Gastrocnemius medialis (tissue), 4 donors: ENCODE measurements at regions of chr15 and their contacts with region 1.

Region 1: GRCh38 chr15:78108299-78109084 is 16.1 kb downstream of the SH2D7 start:
- DNase-seq: peak; percentile 63 to 80
- ATAC-seq: peak; percentile 82 to 89
- H3K4me3 ChIP-seq: no peak overlapping the region
- H3K27ac ChIP-seq: no peak overlapping the region
- H3K4me1 ChIP-seq: no peaks in the 10 kb centered on the region
- H3K27me3 ChIP-seq: no peaks in the 10 kb centered on the region
- CTCF ChIP-seq: peak; percentile 95 to 97 (median 95)
- POLR2A ChIP-seq: no peak

Region 2: DNA sequence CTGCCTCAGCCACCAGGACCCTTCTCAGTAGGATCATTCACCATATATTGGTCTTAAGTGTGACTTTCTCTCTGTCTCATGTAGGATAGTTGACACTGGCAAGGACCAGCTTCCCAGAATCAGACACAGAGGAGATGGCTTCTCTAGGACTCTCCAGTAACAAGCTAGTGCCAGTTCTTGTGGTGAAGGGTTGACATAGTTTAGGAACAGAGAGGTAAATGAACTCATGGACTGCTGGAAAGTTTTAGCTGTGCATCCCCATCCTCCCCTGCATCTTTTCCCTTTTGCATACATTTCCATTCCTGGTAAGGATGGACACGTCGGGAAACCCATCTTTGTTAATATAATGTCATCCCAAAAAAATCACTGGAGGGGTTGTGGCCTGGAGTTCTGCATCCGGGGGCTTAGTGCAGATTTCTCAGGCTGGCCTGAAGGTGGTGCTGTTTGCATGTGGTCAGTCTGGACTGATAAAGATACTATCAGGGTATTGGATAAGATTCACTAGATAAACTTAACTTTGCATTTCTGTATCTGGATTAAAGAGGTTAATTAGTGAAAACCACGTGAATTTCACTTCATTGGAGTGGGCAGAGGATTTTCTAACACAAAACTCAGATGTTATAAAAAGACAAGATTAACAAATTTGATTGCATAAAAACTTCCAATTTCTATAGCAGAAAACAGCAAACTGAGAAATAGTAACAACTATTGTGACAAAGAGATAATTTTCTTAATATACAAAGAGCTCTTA is 141.8 kb before region 1 on chr15:
- in situ Hi-C with region 1: loop called (anchors 5 kb)
- intact Hi-C with region 1: loop called (anchors 1 kb)
- DNase-seq: no peak
- ATAC-seq: peak; percentile 80 to 88
- H3K4me3 ChIP-seq: no peak overlapping the region
- H3K27ac ChIP-seq: no peak overlapping the region
- H3K4me1 ChIP-seq: peaks cover 0 to 6% of the 10 kb centered on the region in 2 donors
- H3K27me3 ChIP-seq: no peaks in the 10 kb centered on the region
- CTCF ChIP-seq: peak; percentile 72 to 90 (median 80)
- POLR2A ChIP-seq: no peak

Region 3: GRCh38 chr15:78000091-78000926 is 108.2 kb before region 1 on chr15:
- in situ Hi-C with region 1: loop called in 2 of 4 experiments (anchors 5 to 10 kb)
- intact Hi-C with region 1: loop called (anchors 1 kb)
- DNase-seq: peak; percentile 60 to 83
- ATAC-seq: peak; percentile 3 to 15
- H3K4me3 ChIP-seq: no peak overlapping the region
- H3K27ac ChIP-seq: no peak overlapping the region
- H3K4me1 ChIP-seq: peaks cover 38 to 42% of the 10 kb centered on the region in 2 donors
- H3K27me3 ChIP-seq: no peaks in the 10 kb centered on the region
- CTCF ChIP-seq: peak; percentile 69 to 89 (median 77)
- POLR2A ChIP-seq: no peak

Region 4: DNA sequence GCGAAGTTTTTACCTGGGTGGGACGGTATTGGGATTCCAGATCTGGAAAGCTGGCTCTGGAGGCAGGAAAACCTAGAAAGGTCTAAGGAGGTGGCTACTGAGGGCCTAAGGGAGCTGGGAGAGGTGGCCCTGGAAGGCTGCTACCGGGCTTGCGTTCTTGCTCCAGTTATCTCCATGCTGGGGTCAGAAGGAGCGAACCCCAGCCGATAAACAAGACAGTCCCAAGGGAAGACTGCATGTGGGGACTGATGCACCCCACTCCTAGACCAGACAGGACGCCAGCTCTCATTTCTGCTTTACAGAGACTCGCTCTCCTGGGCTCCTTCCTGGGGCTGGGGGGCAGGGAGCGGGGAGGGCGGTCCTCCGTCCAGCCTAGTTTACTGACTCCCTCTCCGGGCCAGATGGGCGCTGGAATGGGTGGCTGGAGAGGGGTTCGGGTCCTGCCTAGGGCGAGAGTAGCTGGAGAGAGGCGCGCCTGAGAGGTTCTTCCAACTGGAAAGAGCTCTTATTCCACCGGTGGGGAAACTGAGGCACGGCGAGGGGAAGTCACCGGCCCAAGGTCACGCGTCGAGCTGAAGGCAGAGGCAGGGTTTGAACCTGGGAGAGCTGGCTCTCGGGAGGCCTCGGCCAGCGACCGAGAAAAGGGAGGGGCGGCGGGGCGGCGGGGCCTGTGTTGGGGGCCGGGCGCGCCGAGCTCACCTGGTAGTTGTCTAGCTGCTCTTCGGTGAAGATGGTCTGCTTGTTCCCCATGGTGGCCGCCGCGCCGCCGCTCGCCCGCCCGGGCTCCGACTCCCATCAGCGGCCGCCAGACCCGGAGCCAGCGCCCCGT is 22.2 kb after region 1 on chr15:
- in situ Hi-C with region 1: no loop called
- intact Hi-C with region 1: no loop called
- DNase-seq: no peak
- ATAC-seq: peak in 1 of 2 donors; percentile 10
- H3K4me3 ChIP-seq: peak overlapping the region; percentile 38 to 73 (median 62)
- H3K27ac ChIP-seq: peak overlapping the region; percentile 17 to 78 (median 48)
- H3K4me1 ChIP-seq: peaks cover 21 to 22% of the 10 kb centered on the region in 2 donors
- H3K27me3 ChIP-seq: no peaks in the 10 kb centered on the region
- CTCF ChIP-seq: no peak
- POLR2A ChIP-seq: no peak

Region 5: DNA sequence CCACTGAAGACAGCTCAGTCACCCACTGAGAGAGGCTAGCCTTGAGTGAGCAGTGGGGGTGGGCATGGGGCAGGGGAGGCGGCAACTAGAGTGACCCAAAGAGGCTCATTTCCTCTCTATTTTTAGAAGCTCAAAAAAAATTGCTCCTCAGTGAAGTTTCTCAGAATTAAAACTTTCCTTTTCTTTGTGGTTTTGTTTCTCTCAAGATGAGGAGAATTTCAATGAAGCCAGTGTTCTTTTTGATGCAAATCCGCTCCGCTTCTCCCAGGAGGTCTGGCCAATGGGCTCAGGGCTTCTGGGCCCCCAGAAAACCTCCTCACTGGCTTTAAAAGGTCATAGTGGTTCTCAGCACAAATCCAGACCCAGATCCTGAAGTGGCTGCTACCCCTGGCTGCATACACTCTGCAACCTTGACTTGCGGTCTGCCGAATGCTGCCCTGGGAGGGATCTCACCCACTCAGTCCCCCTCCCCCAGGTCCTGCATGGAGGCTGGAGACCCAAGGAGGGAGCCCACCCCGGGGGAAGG is 126.1 kb after region 1 on chr15 and contains the start of gene ACSBG1:
- in situ Hi-C with region 1: loop called in 1 of 4 experiments (anchors 5 kb)
- intact Hi-C with region 1: no loop called
- DNase-seq: no peak
- ATAC-seq: no peak
- H3K4me3 ChIP-seq: no peak within 1 kb of the TSS
- H3K27ac ChIP-seq: no peak within 1 kb of the TSS
- H3K4me1 ChIP-seq: no peaks in the 10 kb centered on the region
- H3K27me3 ChIP-seq: no peaks in the 10 kb centered on the region
- CTCF ChIP-seq: no peak
- POLR2A ChIP-seq: no peak
- total RNA-seq, gene ACSBG1: 1.9 TPM in 1 of 4 donors, not detected in the others

Region 6: GRCh38 chr15:78422571-78423340 is 314.3 kb after region 1 on chr15:
- in situ Hi-C with region 1: loop called in 1 of 4 experiments (anchors 25 kb)
- intact Hi-C with region 1: loop called (anchors 2 kb)
- DNase-seq: peak; percentile 11 to 32
- ATAC-seq: peak; percentile 57 to 78
- H3K4me3 ChIP-seq: no peak overlapping the region
- H3K27ac ChIP-seq: no peak overlapping the region
- H3K4me1 ChIP-seq: no peaks in the 10 kb centered on the region
- H3K27me3 ChIP-seq: no peaks in the 10 kb centered on the region
- CTCF ChIP-seq: peak; percentile 65 to 93 (median 79)
- POLR2A ChIP-seq: no peak